ENCODE measurements at regions of chr12 and their contacts with region 1.

Region 1: GRCh38 chr12:75414671-75415070 is 23.8 kb downstream of the GLIPR1L2 start:
- DNase-seq: no peak
- H3K4me3 ChIP-seq: no peak overlapping the region
- H3K27ac ChIP-seq: no peak overlapping the region
- H3K4me1 ChIP-seq: no peaks in the 10 kb centered on the region
- H3K27me3 ChIP-seq: no peaks in the 10 kb centered on the region
- CTCF ChIP-seq: no peak
- POLR2A ChIP-seq: no peak

Region 2: GRCh38 chr12:75553398-75553797 is 138.7 kb after region 1 on chr12:
- intact Hi-C with region 1: no loop called
- DNase-seq: no peak
- H3K4me3 ChIP-seq: no peak overlapping the region
- H3K27ac ChIP-seq: no peak overlapping the region
- H3K4me1 ChIP-seq: peaks cover 0 to 4% of the 10 kb centered on the region in 2 donors
- H3K27me3 ChIP-seq: no peaks in the 10 kb centered on the region
- CTCF ChIP-seq: no peak
- POLR2A ChIP-seq: no peak

Region 3: GRCh38 chr12:76106631-76107030 is 692.0 kb after region 1 on chr12:
- intact Hi-C with region 1: loop called (anchors 5 kb)
- DNase-seq: no peak
- H3K4me3 ChIP-seq: no peak overlapping the region
- H3K27ac ChIP-seq: no peak overlapping the region
- H3K4me1 ChIP-seq: no peaks in the 10 kb centered on the region
- H3K27me3 ChIP-seq: no peaks in the 10 kb centered on the region
- CTCF ChIP-seq: no peak
- POLR2A ChIP-seq: no peak

Measured in breast epithelium (tissue), 4 donors.